IMR-90 (cell line): ENCODE measurements at regions of chr1 and their contacts with region 1.

Region 1: DNA sequence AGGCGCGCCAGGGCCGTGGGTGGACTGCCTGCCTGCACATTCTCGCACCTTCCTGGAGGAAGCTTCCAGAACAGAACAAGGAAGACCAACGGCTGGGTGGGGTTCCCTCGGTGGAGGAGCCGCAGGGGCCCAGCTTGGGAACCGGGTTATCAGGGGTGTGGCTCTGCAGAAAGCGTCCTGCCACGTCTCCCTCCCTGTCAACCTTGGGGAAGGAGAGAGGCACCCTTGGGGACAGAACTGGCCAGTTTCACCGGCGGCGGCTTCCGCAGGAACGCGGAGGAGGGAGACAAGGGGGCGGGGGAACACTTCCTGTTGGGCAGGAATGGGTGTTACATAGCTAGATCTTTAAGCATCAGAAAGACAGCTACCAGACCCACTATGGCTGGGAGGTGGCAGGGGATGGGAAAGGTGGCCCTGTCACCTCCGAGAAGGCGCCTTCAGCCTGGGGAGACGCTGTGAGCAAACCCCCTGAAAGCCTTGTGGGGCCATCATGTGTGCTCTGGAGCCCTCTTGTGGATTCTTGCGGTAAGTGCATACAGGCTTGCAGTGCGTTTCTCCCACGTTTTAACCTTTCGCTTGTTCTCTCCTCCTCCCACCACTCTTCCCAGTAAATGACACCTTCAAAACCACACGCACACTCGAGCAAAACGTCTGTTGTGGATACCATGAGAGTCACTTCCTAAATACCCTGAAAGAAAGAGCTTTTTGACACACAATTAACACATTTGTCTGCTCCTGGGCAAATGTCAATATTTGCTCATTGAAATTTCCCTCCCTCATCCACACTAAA is 3.8 kb upstream of the PLEKHA6 start:
- DNase-seq: peak; percentile 71
- ATAC-seq: peak; percentile 75
- H3K4me3 ChIP-seq: peak overlapping the region; percentile 22
- H3K27ac ChIP-seq: peak overlapping the region; percentile 28; the same call in 1 of the 2 replicates
- H3K4me1 ChIP-seq: peaks cover 14% of the 10 kb centered on the region
- H3K27me3 ChIP-seq: peaks cover 4% of the 10 kb centered on the region
- CTCF ChIP-seq: peak; percentile 98
- POLR2A ChIP-seq: peak; percentile 61; the same call in 1 of the 2 replicates
- RAD21 ChIP-seq: peak; percentile 99

Region 2: GRCh38 chr1:203861379-203862184 is 501.9 kb before region 1 on chr1 and contains the start of gene SNRPE:
- CTCF ChIA-PET with region 1: interaction called, 3 read pairs
- POLR2A ChIA-PET with region 1: no interaction called
- dilution Hi-C with region 1: no loop called
- in situ Hi-C with region 1: loop called (anchors 10 kb)
- intact Hi-C with region 1: loop called (anchors 5 kb)
- DNase-seq: peak; percentile 98
- ATAC-seq: peak; percentile 96
- H3K4me3 ChIP-seq: peak within 1 kb of the TSS; percentile 75
- H3K27ac ChIP-seq: peak within 1 kb of the TSS; percentile 92
- H3K4me1 ChIP-seq: peaks cover 8% of the 10 kb centered on the region; the same call in 1 of the 2 replicates
- H3K27me3 ChIP-seq: no peaks in the 10 kb centered on the region
- CTCF ChIP-seq: peak; percentile 90
- POLR2A ChIP-seq: peak; percentile 84
- RAD21 ChIP-seq: peak; percentile 95
- total RNA-seq, gene SNRPE: 43.6 and 118 TPM in 2 replicates

Region 3: DNA sequence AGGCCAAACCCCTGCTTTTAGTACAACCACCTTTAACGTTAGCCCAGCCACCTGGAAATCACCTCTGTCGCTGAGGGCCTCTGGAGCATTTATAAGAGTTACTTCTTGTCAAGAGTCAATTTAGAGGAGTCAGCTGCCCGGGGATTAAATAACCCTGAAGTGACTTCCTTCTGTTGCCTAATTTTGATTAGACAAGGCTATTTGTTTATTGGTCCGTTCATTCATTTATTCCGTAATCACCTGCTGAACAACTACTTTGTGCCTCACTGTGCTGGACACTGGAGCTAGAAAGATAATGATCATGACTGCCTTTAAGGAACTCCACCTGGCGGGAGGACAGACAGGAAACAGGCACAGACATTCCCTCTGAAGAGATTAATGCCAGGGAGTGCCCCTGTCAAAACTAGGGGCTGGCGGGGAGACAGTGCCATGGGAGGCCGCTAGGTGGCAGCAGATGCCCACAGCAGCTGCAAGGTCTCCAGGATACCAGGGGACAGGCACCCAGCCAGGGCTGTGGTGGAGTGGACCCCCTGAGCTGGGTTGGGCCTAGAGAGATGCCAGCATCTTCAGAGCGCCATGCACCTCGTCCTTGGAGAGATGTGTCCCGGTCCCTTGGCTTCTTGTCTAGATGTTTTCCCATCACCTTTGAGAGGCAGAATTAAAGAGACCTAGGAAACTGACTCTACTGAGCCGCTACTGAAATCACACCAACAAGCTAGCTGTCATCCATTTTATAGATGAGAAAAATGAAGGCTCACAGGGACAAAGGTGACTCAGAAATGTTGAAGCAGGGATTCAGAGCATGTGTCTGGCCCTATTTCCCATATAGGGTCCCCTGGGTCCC is 201.1 kb before region 1 on chr1:
- CTCF ChIA-PET with region 1: interaction called, 27 read pairs
- POLR2A ChIA-PET with region 1: no interaction called
- dilution Hi-C with region 1: no loop called
- in situ Hi-C with region 1: loop called (anchors 5 kb)
- intact Hi-C with region 1: loop called (anchors 1 kb)
- DNase-seq: peak; percentile 56
- ATAC-seq: peak; percentile 98
- H3K4me3 ChIP-seq: no peak overlapping the region
- H3K27ac ChIP-seq: no peak overlapping the region
- H3K4me1 ChIP-seq: no peaks in the 10 kb centered on the region
- H3K27me3 ChIP-seq: peaks cover 1% of the 10 kb centered on the region; the same call in 1 of the 2 replicates
- CTCF ChIP-seq: peak; percentile 99
- POLR2A ChIP-seq: peak; percentile 58
- RAD21 ChIP-seq: peak; percentile 99

Region 4: GRCh38 chr1:204213668-204214662 is 149.6 kb before region 1 on chr1 and contains the start of gene GOLT1A:
- CTCF ChIA-PET with region 1: interaction called, 17 read pairs
- POLR2A ChIA-PET with region 1: no interaction called
- dilution Hi-C with region 1: no loop called
- in situ Hi-C with region 1: loop called (anchors 5 kb)
- intact Hi-C with region 1: loop called (anchors 1 kb)
- DNase-seq: peak; percentile 87
- ATAC-seq: peak; percentile 97
- H3K4me3 ChIP-seq: no peak within 1 kb of the TSS
- H3K27ac ChIP-seq: no peak within 1 kb of the TSS
- H3K4me1 ChIP-seq: 0 out of 2 replicates have a peak, but pooled peaks cover 1% of the 10 kb centered on the region
- H3K27me3 ChIP-seq: no peaks in the 10 kb centered on the region; the same call in 1 of the 2 replicates
- CTCF ChIP-seq: peak; percentile 86
- POLR2A ChIP-seq: 0 out of 2 replicates have a peak, but pooled peaks have one; percentile 28
- RAD21 ChIP-seq: peak; percentile 86
- total RNA-seq, gene GOLT1A: not detected in 2 replicates

Region 5: GRCh38 chr1:204263254-204263910 is 100.1 kb before region 1 on chr1:
- CTCF ChIA-PET with region 1: interaction called, 23 read pairs
- POLR2A ChIA-PET with region 1: no interaction called
- dilution Hi-C with region 1: no loop called
- in situ Hi-C with region 1: no loop called
- intact Hi-C with region 1: loop called (anchors 1 kb)
- DNase-seq: peak; percentile 38
- ATAC-seq: peak; percentile 39
- H3K4me3 ChIP-seq: no peak overlapping the region
- H3K27ac ChIP-seq: no peak overlapping the region
- H3K4me1 ChIP-seq: peaks cover 18% of the 10 kb centered on the region
- H3K27me3 ChIP-seq: no peaks in the 10 kb centered on the region
- CTCF ChIP-seq: no peak
- POLR2A ChIP-seq: no peak
- RAD21 ChIP-seq: no peak